HEK293T (cell line): ENCODE measurements at regions of chr12 and their contacts with region 1.

Region 1: DNA sequence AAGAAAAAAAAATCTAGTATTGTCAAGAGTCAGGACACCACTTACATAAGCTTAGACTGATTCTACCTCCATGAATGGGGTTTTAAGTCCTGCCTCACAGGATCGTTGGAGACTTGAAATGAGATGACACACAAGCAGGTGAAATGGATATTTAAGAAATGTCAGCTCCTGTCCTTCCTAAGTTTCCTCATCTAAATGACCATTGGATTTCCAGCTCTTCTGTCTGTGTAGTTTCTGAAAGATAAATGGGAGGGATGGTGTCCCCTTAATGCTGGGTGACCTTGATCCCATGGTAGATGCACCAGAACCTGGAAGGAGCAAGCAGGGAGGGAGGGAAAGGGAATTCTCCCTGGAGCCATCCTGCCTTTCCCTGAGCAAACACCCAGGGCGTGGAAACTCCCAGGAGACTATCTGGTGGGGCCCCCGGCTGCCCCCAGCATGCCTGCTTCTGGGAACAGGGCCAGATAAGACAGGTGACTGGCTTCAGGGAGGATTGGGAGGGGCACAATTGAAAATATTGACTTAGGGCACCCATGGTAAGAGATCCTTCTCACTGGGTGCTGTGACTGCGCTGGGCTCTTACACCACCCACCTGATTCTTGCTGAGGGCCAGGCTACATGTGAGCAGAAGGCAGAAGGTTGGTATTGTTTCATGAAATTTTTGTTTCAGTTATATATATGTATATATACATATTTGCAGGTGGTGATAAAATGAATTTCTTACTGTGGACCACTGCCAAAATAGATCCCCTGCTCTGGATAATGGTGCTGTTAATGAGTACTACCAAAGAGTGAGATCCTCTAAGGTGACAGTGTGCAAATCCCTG is 9.6 kb downstream of the KRT8 start:
- DNase-seq: no peak

Region 2: GRCh38 chr12:52884526-52885293 is 10.6 kb before region 1 on chr12:
- CTCF ChIA-PET with region 1: interaction called, 15 read pairs
- POLR2A ChIA-PET with region 1: no interaction called
- DNase-seq: peak; percentile 81